ENCODE measurements at regions of chr5 and their contacts with region 1.

Region 1: DNA sequence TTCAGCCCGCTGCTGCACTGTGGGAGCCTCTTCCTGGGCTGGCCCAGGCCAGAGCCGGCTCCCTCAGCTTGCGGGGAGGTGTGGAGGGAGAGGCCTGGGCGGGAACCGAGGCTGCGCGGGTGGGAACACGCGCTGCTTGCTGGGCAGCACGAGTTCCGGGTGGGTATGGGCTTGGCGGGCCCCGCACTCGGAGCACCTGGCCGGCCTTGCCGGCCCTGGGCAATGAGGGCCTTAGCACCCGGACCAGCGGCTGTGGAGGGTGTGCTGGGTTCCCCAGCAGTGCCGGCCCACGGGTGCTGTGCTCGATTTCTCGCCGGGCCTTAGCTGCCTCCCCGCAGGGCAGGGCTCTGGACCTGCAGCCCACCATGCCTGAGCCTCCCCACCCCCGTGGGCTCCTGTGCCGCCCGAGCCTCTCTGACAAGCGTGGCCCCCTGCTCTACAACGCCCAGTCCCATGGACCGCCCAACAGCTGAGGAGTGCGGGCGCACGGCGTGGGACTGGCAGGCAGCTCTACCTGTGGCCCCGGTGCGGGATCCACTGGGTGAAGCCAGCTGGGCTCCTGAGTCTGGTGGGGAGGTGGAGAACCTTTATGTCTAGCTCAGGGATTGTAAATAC is 1366.4 kb upstream of the NUDT12 start:
- DNase-seq: no peak
- H3K4me3 ChIP-seq: no peak overlapping the region
- H3K27ac ChIP-seq: no peak overlapping the region
- H3K4me1 ChIP-seq: no peaks in the 10 kb centered on the region
- H3K27me3 ChIP-seq: no peaks in the 10 kb centered on the region
- CTCF ChIP-seq: no peak

Region 2: DNA sequence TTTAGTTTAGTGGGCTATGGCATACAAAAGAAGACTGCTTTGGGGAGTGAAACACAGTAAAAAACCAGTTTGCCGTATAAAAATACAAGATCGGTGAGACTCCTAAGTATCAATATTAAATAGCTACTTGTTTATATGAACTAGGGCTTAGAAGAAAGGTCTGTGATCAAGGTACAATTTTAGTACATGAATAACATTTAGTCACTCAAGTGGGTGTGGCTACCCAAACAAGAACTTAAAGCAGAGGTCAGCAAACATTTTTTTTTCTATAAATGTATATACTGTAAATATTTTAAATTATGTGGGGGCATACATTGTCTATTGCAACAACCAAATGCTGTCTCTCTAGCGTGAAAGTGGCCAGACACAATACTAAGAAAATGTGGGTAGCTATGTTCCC is 86.1 kb after region 1 on chr5:
- CTCF ChIA-PET with region 1: no interaction called
- POLR2A ChIA-PET with region 1: no interaction called
- intact Hi-C with region 1: loop called (anchors 5 kb)
- DNase-seq: no peak
- H3K4me3 ChIP-seq: no peak overlapping the region
- H3K27ac ChIP-seq: no peak overlapping the region
- H3K4me1 ChIP-seq: no peaks in the 10 kb centered on the region
- H3K27me3 ChIP-seq: no peaks in the 10 kb centered on the region
- CTCF ChIP-seq: no peak

Measured in A673 (cell line).